ENCODE measurements at regions of chr5 and their contacts with region 1.

Region 1: GRCh38 chr5:159049844-159050315 is 49.8 kb downstream of the EBF1 start:
- DNase-seq: no peak
- ATAC-seq: peak; percentile 68

Region 2: GRCh38 chr5:158565017-158565789 is 484.7 kb before region 1 on chr5:
- intact Hi-C with region 1: no loop called
- DNase-seq: no peak
- ATAC-seq: no peak

Region 3: DNA sequence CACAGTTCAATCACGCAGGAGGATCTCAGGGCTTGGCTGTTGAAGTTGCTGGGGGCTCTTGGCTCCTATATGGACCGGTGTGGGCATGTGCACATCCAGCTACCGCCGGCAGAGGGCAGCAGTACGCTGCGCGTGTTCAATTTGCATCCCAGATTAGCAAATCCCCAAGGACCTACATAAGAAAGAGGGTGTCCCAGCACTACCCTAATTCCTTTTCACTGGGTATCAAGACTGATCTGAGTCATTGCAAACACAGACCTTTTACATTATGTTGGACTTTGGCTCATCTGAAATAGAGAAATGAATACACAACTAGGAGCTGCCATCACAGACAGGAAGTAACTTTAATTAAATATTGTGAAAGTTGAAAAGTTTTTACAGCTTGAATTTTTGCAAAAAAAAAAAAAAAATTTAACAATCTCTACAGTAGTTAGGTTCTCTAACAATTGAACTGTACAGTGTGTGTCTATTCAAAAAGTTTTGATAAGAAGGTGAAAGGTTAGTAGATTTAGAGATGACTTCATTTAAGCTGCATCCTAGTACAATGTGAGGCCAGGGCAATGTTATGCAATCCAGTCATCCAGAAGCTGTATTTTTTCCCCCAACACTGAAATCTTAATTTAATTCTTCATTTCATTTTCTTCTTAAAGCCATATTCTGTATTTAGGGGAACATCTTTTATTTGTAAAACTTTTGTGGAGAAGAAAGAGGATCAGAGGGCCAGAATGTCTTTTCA is 354.1 kb before region 1 on chr5:
- intact Hi-C with region 1: loop called (anchors 2 kb)
- DNase-seq: peak; percentile 84
- ATAC-seq: peak; percentile 62

Region 4: DNA sequence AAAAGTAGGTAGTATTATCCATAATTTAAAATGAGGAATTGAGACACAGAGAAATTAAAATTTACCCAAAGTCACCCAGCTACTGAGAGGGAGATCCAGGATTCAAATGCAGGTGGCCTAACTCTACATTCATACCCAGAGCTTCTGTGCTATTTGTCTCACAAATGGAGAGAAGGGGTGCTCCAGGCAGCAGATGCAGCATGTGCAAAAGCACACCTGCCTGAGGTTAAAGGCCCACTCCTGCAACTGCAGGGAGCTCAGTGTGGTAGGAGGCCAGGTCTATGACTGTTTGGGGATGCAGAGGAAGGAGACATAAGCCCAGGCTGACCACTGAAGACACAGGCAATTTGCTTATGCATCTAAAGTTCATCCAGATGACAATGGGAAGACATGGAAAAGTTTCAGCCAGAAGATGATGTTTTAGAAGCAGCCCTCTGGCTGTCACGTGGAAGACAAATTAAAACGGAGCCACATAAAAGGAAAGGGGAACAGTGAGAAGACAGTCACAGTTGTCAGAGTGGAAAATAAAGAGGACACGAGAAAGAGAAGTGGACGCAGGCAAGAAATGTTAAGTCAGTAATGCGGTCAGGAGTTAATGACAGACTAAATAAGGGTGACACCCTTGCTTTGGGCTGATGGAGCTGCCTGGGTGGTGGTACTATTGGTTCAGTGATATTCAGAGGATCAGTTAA is 164.9 kb before region 1 on chr5:
- intact Hi-C with region 1: no loop called
- DNase-seq: no peak
- ATAC-seq: no peak

Region 5: GRCh38 chr5:159010661-159011442 is 39.0 kb before region 1 on chr5:
- intact Hi-C with region 1: loop called (anchors 5 kb)
- DNase-seq: no peak
- ATAC-seq: peak; percentile 71

Measured in Right ventricle myocardium inferior (tissue), 1 donor.